ENCODE measurements at regions of chr12 and their contacts with region 1.

Region 1: GRCh38 chr12:120528861-120529525 is at the start of gene COQ5:
- DNase-seq: peak; percentile 80
- ATAC-seq: peak; percentile 92
- H3K4me3 ChIP-seq: peak within 1 kb of the TSS; percentile 72 to 95 (median 82)
- H3K27ac ChIP-seq: peak within 1 kb of the TSS; percentile 97
- H3K4me1 ChIP-seq: no peaks in the 10 kb centered on the region
- H3K27me3 ChIP-seq: no peaks in the 10 kb centered on the region
- CTCF ChIP-seq: 0 out of 2 replicates have a peak, but pooled peaks have one; percentile 5
- EP300 ChIP-seq: no peak
- POLR2A ChIP-seq: peak; percentile 85 to 86
- RAD21 ChIP-seq: no peak
- total RNA-seq, gene COQ5: 41.5 and 59.8 TPM in 2 replicates

Region 2: GRCh38 chr12:120495723-120496412 is 33.1 kb before region 1 on chr12 and contains the start of gene DYNLL1:
- CTCF ChIA-PET with region 1: no interaction called
- POLR2A ChIA-PET with region 1: interaction called, 30 read pairs
- in situ Hi-C with region 1: no loop called
- intact Hi-C with region 1: no loop called
- DNase-seq: peak; percentile 93
- ATAC-seq: peak; percentile 94
- H3K4me3 ChIP-seq: peak within 1 kb of the TSS; percentile 95 to 100 (median 97)
- H3K27ac ChIP-seq: peak within 1 kb of the TSS; percentile 69
- H3K4me1 ChIP-seq: peaks cover 28% of the 10 kb centered on the region
- H3K27me3 ChIP-seq: no peaks in the 10 kb centered on the region; a peak in 1 of 5 replicates
- CTCF ChIP-seq: no peak; the same call in 1 of the 2 replicates
- EP300 ChIP-seq: peak in 1 of 2 experiments; percentile 55; a peak in 3 of 4 replicates
- POLR2A ChIP-seq: peak; percentile 95 to 100
- RAD21 ChIP-seq: peak; percentile 6; the same call in 1 of the 2 replicates
- total RNA-seq, gene DYNLL1: 271 and 403 TPM in 2 replicates

Region 3: DNA sequence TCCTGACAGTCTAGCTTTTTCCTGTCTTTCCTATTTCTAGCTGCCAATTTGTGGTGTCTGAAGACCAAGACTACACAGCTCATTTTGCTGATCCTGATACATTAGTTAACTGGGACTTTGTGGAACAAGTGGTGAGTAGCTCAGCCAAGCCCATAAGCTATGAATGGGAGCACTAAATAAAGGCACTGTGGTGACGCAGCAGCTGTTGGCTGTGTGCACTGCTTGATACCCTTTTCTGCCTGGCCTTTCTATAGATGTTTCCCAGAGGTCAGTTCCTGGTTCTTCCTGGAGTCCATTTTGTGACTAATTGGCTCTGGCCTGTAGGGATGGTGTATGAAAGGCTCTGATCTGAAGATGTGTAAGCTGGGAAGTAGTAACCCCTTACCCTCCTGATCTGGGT is 25.7 kb after region 1 on chr12:
- CTCF ChIA-PET with region 1: no interaction called
- POLR2A ChIA-PET with region 1: interaction called, 20 read pairs
- in situ Hi-C with region 1: no loop called
- intact Hi-C with region 1: loop called (anchors 2 kb)
- DNase-seq: no peak
- ATAC-seq: no peak
- H3K4me3 ChIP-seq: no peak overlapping the region
- H3K27ac ChIP-seq: no peak overlapping the region
- H3K4me1 ChIP-seq: peaks cover 22% of the 10 kb centered on the region
- H3K27me3 ChIP-seq: no peaks in the 10 kb centered on the region
- CTCF ChIP-seq: no peak
- EP300 ChIP-seq: no peak
- POLR2A ChIP-seq: no peak
- RAD21 ChIP-seq: no peak

Region 4: DNA sequence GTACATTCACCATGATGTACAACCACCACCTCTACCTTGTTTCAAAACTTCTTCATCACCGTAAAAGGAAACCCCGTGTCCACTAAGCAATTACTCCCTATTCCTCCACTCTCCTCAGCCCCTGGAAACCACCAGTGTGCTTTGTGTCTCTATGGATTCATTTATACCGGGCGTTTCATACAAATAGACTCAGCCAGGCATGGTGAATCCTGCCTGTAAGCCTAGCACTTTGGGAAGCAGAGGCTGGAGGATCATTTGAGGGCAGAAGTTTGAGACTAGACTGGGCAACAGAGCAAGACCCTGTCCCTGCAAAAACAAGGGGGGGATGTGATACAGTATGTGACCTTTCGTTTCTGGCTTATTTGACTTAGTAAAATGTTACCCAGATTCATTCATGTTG is 849.7 kb after region 1 on chr12:
- CTCF ChIA-PET with region 1: no interaction called
- POLR2A ChIA-PET with region 1: no interaction called
- in situ Hi-C with region 1: no loop called
- intact Hi-C with region 1: no loop called
- DNase-seq: no peak
- ATAC-seq: no peak
- H3K4me3 ChIP-seq: no peak overlapping the region
- H3K27ac ChIP-seq: no peak overlapping the region
- H3K4me1 ChIP-seq: peaks cover 31% of the 10 kb centered on the region
- H3K27me3 ChIP-seq: no peaks in the 10 kb centered on the region
- CTCF ChIP-seq: no peak
- EP300 ChIP-seq: no peak
- POLR2A ChIP-seq: no peak
- RAD21 ChIP-seq: no peak

Measured in HepG2 (cell line).